Right ventricle myocardium inferior (tissue), 1 donor: ENCODE measurements at regions of chr11 and their contacts with region 1.

Region 1: DNA sequence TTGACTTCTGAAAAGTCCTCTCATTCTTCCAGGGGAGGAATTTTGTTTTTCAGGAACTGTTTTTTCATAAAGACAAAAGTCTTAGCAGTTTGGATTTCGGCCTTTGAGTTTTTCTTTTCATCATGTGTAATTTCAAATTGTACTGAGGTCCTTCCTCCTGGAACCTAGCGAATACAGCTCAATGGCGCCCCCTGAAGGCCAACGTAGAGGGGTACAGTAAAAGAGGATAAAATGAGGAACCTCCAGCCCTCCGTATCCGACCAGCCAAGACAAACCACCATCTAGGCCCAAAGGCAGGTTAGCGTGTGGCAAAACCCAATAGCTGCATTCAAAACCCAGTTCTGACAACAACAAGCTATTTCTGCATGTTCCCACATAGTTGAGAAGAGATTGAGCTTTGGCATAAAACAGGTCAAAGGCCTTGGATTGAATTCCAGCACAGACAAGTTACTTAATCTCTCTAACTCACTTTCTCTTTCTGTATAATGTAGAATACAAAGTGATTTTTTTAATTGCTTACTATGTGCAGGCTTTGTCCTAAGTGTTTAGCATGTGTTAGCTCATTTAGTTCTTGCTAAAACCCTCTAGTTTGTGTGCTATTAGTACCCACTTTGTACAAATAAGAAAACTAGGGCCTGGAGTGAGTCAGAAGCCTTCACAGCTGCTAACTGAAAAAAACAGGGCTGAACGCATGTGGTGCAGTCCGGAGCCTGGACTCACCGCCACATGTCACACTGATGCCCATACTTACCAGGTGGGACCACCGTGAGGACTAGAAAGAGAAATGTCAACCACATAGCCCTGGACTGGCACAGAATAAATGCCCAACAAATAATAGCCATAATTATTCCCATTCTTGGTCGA is 43.2 kb upstream of the ETS1 start:
- DNase-seq: peak; percentile 93
- ATAC-seq: peak; percentile 95

Region 2: DNA sequence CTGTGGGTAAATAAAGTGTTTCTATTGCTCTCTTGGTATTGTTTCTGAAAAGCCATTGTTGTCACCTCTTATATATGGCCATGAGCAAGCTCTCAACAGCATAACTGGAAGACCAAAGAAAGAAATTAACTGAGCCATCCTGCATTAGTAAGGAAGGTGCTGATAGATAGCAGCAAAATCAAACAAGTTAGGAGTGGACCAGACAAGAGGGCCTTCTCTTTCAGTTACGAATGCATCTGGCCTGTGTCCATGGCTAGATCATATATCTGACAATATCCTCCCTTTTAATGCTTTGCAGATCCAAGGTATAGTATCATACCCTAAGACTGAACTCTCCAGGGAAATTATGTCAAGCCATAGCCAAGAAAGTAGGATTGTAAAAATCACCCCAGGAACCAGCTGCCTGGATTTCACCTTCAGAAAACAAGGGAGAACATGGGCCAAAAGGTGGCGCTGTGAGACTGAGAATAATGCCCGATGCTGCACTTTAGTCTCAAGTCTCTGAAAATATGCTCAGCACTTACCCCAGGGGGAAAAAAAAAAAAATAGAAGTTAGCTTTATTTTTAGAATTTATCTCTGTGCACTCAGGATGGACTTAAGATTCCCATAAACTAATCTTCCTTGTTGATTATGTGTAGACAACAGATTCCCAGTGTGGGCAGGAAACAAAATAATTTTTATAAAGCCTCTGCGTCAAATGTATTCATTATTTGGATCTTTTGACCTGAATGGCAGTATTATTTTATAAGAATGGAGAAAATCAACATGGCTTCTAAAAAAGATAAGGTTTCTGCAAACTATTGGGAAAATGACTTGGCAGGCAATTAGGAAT is 458.3 kb before region 1 on chr11:
- intact Hi-C with region 1: loop called (anchors 1 kb)
- DNase-seq: peak; percentile 75
- ATAC-seq: peak; percentile 76

Region 3: GRCh38 chr11:128334311-128335044 is 296.1 kb before region 1 on chr11:
- intact Hi-C with region 1: loop called (anchors 5 kb)
- DNase-seq: no peak
- ATAC-seq: peak; percentile 52

Region 4: GRCh38 chr11:128725630-128726319 is 95.2 kb after region 1 on chr11:
- intact Hi-C with region 1: no loop called
- DNase-seq: no peak
- ATAC-seq: peak; percentile 61

Region 5: GRCh38 chr11:128757235-128757711 is 126.7 kb after region 1 on chr11:
- intact Hi-C with region 1: loop called (anchors 5 kb)
- DNase-seq: no peak
- ATAC-seq: peak; percentile 52